ENCODE measurements at regions of chr2 and their contacts with region 1.

Region 1: GRCh38 chr2:109028277-109028676 is 39.3 kb upstream of the EDAR start:
- DNase-seq: no peak
- H3K4me3 ChIP-seq: no peak overlapping the region
- H3K27ac ChIP-seq: no peak overlapping the region
- H3K4me1 ChIP-seq: peaks cover 0 to 5% of the 10 kb centered on the region in 2 donors
- H3K27me3 ChIP-seq: no peaks in the 10 kb centered on the region
- CTCF ChIP-seq: no peak
- POLR2A ChIP-seq: no peak

Region 2: GRCh38 chr2:108853406-108853805 is 174.9 kb before region 1 on chr2:
- intact Hi-C with region 1: loop called (anchors 5 kb)
- DNase-seq: no peak
- H3K4me3 ChIP-seq: no peak overlapping the region
- H3K27ac ChIP-seq: no peak overlapping the region
- H3K4me1 ChIP-seq: no peaks in the 10 kb centered on the region
- H3K27me3 ChIP-seq: no peaks in the 10 kb centered on the region
- CTCF ChIP-seq: no peak
- POLR2A ChIP-seq: no peak

Region 3: DNA sequence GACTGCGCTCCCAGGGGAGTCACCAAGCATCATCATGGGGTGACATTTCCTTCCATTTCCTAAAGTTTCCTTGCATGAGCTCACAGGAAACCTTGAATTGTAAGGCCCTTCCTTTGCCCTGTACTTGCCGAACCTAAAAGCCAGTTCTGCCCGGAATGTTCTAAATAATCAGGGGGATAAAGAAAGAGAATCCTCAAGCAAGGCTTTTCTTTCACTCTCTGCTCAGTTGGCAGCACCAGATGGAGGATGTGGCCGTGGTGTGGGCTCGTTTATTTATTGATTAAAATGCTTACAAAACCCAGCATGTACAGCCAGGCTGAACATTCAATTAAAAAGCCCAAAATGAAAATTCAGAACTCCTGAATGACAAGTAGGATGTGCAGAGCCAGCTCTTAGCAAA is 271.3 kb after region 1 on chr2:
- intact Hi-C with region 1: no loop called
- DNase-seq: no peak
- H3K4me3 ChIP-seq: no peak overlapping the region
- H3K27ac ChIP-seq: no peak overlapping the region
- H3K4me1 ChIP-seq: no peaks in the 10 kb centered on the region
- H3K27me3 ChIP-seq: no peaks in the 10 kb centered on the region
- CTCF ChIP-seq: no peak
- POLR2A ChIP-seq: no peak

Measured in breast epithelium (tissue), 4 donors.